ENCODE measurements at regions of chr3 and their contacts with region 1.

Region 1: GRCh38 chr3:110526777-110527727 is 544.6 kb upstream of the NECTIN3 start:
- DNase-seq: peak; percentile 90
- H3K4me3 Mint-ChIP-seq: no peak overlapping the region
- H3K27ac Mint-ChIP-seq: peak overlapping the region; percentile 88
- H3K4me1 Mint-ChIP-seq: peaks cover 19% of the 10 kb centered on the region
- H3K27me3 Mint-ChIP-seq: no peaks in the 10 kb centered on the region
- CTCF ChIP-seq: no peak

Region 2: DNA sequence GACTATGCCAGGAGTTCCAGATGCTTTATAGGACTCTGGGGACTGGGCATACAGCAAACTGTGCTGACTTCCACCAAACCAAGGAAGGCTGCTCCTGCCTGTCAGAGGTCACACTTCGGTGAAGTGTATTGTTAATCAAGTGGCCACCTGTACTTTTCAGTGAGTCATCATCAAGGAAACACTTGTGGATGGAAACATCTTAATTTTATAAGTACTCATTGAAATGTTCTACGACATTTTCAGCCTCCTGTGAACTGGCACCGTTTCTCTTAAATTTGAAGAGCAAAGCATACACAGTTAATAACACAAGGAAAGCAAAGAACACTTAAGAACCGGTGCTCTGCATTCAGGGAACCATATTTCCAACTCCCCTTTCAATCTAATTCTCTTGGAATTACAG is 388.0 kb before region 1 on chr3:
- CTCF ChIA-PET with region 1: no interaction called
- POLR2A ChIA-PET with region 1: no interaction called
- intact Hi-C with region 1: no loop called
- DNase-seq: no peak
- H3K4me3 Mint-ChIP-seq: no peak overlapping the region
- H3K27ac Mint-ChIP-seq: no peak overlapping the region
- H3K4me1 Mint-ChIP-seq: no peaks in the 10 kb centered on the region
- H3K27me3 Mint-ChIP-seq: no peaks in the 10 kb centered on the region
- CTCF ChIP-seq: no peak

Region 3: GRCh38 chr3:110413807-110414748 is 113.0 kb before region 1 on chr3:
- CTCF ChIA-PET with region 1: interaction called, 3 read pairs
- POLR2A ChIA-PET with region 1: no interaction called
- intact Hi-C with region 1: loop called (anchors 10 kb)
- DNase-seq: peak; percentile 64
- H3K4me3 Mint-ChIP-seq: peak overlapping the region; percentile 22
- H3K27ac Mint-ChIP-seq: peak overlapping the region; percentile 96
- H3K4me1 Mint-ChIP-seq: peaks cover 27% of the 10 kb centered on the region
- H3K27me3 Mint-ChIP-seq: no peaks in the 10 kb centered on the region
- CTCF ChIP-seq: no peak

Region 4: GRCh38 chr3:110576962-110577361 is 49.9 kb after region 1 on chr3:
- CTCF ChIA-PET with region 1: no interaction called
- POLR2A ChIA-PET with region 1: no interaction called
- intact Hi-C with region 1: loop called (anchors 5 kb)
- DNase-seq: peak; percentile 86
- H3K4me3 Mint-ChIP-seq: no peak overlapping the region
- H3K27ac Mint-ChIP-seq: peak overlapping the region; percentile 84
- H3K4me1 Mint-ChIP-seq: peaks cover 31% of the 10 kb centered on the region
- H3K27me3 Mint-ChIP-seq: no peaks in the 10 kb centered on the region
- CTCF ChIP-seq: no peak

Measured in MCF 10A (cell line).